ENCODE measurements at regions of chr3 and their contacts with region 1.

Region 1: DNA sequence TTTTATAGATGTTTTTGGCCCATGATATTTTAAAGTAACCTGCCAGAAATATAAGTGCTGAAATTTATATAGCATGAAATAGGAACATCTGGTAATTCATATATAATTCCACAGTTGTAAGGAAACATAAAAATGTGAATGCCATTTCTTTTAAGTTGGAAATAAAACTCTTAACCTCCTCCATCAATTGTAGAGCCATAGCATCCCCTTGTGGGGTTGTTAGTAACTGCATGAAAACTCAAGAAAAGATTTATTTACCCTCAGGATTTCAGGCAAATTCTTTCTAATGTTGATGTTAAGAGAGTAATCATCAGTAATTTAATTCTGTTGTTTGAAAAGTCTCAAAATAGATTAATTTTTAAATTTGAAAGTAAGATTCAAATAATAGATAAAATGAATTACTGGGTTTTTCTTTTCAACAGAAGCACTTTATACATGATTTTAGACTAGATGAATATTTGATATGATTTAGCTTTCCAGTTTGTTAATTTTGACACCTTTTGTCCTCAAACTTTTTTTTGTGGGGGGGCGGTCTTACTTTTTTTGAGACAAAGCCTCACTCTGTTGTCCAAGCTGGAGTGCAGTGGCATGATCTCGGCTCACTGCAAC is 74.7 kb downstream of the RASA2 start:
- DNase-seq: peak; percentile 87
- H3K4me3 Mint-ChIP-seq: no peak overlapping the region
- H3K27ac Mint-ChIP-seq: no peak overlapping the region
- H3K4me1 Mint-ChIP-seq: peaks cover 13% of the 10 kb centered on the region
- H3K27me3 Mint-ChIP-seq: no peaks in the 10 kb centered on the region

Region 2: DNA sequence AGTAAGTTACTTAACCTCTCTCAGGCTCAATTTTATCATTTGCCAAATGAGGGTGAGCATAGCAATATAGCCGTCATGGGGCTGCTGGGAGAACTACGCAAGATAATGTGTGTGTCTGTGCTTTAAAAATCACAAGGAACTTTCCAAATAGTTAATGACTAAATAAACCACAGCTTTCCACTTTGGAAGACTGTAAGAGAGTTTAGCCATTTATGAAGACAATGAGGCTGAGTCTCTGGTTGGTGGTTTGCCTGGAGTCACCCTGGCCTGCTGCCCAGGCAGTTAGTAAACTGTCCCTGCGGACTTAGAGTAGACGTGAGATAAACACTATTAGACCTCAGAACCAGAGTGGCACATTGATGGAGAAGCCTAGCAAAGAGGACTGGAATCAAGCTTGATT is 1268.8 kb before region 1 on chr3:
- intact Hi-C with region 1: no loop called
- DNase-seq: no peak
- H3K4me3 Mint-ChIP-seq: no peak overlapping the region
- H3K27ac Mint-ChIP-seq: no peak overlapping the region
- H3K4me1 Mint-ChIP-seq: no peaks in the 10 kb centered on the region
- H3K27me3 Mint-ChIP-seq: peaks cover 2% of the 10 kb centered on the region

Region 3: DNA sequence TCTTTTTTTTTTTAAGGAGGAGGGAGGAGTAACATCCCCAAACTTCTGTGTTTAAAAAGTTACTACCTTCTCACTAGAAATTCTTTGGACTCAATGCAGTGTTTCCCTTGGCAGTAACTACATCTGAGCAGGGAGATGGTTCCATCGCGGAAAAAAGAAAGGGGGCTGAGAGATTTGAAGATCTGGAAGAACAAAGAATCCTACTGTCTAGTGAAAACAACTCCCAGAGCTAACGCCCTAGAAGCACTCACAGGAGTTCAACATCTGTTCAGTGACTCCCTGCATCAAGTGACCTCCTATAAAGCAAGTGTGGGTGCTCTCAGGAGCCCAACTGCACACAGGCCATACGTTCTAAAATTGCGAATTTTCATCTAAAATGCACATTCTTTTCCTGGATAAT is 396.7 kb before region 1 on chr3:
- intact Hi-C with region 1: no loop called
- DNase-seq: no peak
- H3K4me3 Mint-ChIP-seq: no peak overlapping the region
- H3K27ac Mint-ChIP-seq: no peak overlapping the region
- H3K4me1 Mint-ChIP-seq: no peaks in the 10 kb centered on the region
- H3K27me3 Mint-ChIP-seq: peaks cover 8% of the 10 kb centered on the region

Region 4: DNA sequence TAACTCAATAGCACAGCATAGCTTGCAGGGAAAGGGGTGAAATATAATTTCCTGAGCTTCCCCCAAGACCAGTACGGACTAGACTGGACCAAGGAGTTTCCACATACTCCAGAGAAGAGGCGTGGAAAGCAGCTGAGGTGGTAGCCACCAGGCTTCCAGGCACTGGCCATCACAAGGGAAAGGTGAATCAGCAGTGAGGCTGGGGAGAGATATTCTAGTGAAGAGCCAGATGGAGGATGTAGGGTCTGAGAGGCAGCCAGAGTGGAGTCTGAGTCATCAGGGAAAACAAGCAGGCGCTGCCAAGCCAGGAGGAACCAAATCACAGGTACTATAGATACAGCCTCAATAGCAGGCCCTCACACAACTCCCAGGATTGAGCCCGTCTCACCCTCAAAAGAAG is 84.3 kb before region 1 on chr3:
- intact Hi-C with region 1: loop called (anchors 1 kb)
- DNase-seq: peak; percentile 53
- H3K4me3 Mint-ChIP-seq: no peak overlapping the region
- H3K27ac Mint-ChIP-seq: no peak overlapping the region
- H3K4me1 Mint-ChIP-seq: peaks cover 30% of the 10 kb centered on the region
- H3K27me3 Mint-ChIP-seq: peaks cover 13% of the 10 kb centered on the region

Region 5: GRCh38 chr3:141625506-141625905 is 64.0 kb after region 1 on chr3:
- intact Hi-C with region 1: no loop called
- DNase-seq: peak; percentile 38
- H3K4me3 Mint-ChIP-seq: no peak overlapping the region
- H3K27ac Mint-ChIP-seq: no peak overlapping the region
- H3K4me1 Mint-ChIP-seq: no peaks in the 10 kb centered on the region
- H3K27me3 Mint-ChIP-seq: no peaks in the 10 kb centered on the region

Region 6: GRCh38 chr3:141644931-141645330 is 83.4 kb after region 1 on chr3:
- intact Hi-C with region 1: loop called (anchors 5 kb)
- DNase-seq: peak; percentile 91
- H3K4me3 Mint-ChIP-seq: no peak overlapping the region
- H3K27ac Mint-ChIP-seq: no peak overlapping the region
- H3K4me1 Mint-ChIP-seq: no peaks in the 10 kb centered on the region
- H3K27me3 Mint-ChIP-seq: peaks cover 2% of the 10 kb centered on the region